Dendritic cell treated with granulocyte-macrophage colony-stimulating factor and Interleukin-4, amounts not matched to agents 40 ng/mL and 50 ng/mL, for 4 days (primary cell): ENCODE measurements at regions of chr2 and their contacts with region 1.

Region 1: GRCh38 chr2:101205521-101205998 is 47.1 kb upstream of the CNOT11 start:
- H3K4me3 Mint-ChIP-seq: peak overlapping the region; percentile 13
- H3K27ac Mint-ChIP-seq: no peak overlapping the region
- H3K4me1 Mint-ChIP-seq: peaks cover 5% of the 10 kb centered on the region
- H3K27me3 Mint-ChIP-seq: no peaks in the 10 kb centered on the region

Region 2: GRCh38 chr2:101012706-101013181 is 192.8 kb before region 1 on chr2:
- intact Hi-C with region 1: loop called (anchors 1 kb)
- H3K4me3 Mint-ChIP-seq: no peak overlapping the region
- H3K27ac Mint-ChIP-seq: peak overlapping the region; percentile 39
- H3K4me1 Mint-ChIP-seq: peaks cover 34% of the 10 kb centered on the region
- H3K27me3 Mint-ChIP-seq: no peaks in the 10 kb centered on the region

Region 3: DNA sequence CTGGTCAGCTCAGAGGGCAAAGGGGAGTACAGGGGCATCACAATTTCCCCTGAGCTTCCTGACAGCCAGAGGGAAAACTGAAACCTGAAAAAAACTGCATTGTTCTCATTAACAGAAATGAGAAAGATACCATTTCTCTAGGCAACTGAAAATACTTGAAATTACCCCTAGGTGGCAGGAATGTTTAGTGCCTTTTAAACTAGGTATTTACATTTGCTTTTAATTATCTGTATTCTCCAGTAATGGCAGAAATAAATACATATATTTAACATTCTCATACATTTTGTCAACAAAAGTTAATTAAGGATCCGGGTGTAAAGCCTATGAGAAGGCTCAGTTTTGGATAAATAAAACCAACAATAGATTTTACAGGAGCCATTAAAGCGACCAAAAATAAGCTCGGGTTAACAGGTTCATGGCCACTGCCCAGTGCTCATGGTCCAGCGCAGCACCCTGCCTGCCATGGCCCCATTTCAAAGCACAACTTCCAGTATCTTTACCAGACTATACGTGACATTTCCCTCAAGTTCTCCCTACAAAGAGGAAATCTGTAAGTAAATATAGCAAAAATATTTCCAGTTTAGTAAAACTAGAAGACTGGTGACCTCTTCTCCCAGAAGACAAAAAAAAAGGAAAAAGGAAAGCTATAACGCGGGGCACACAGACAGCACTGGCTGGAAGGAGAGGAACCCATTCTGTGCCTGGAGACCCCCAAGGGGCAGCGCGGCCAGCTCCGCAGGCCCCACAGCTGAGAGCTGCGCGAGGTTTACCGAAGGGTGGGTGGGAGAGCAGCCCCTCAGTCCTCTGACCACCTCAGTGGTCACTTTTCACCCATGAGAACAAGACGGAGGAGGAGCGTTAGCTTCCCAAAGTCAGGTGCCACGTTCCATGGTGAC is 168.8 kb before region 1 on chr2:
- intact Hi-C with region 1: loop called (anchors 1 kb)
- H3K4me3 Mint-ChIP-seq: no peak overlapping the region
- H3K27ac Mint-ChIP-seq: no peak overlapping the region
- H3K4me1 Mint-ChIP-seq: peaks cover 29% of the 10 kb centered on the region
- H3K27me3 Mint-ChIP-seq: no peaks in the 10 kb centered on the region

Region 4: DNA sequence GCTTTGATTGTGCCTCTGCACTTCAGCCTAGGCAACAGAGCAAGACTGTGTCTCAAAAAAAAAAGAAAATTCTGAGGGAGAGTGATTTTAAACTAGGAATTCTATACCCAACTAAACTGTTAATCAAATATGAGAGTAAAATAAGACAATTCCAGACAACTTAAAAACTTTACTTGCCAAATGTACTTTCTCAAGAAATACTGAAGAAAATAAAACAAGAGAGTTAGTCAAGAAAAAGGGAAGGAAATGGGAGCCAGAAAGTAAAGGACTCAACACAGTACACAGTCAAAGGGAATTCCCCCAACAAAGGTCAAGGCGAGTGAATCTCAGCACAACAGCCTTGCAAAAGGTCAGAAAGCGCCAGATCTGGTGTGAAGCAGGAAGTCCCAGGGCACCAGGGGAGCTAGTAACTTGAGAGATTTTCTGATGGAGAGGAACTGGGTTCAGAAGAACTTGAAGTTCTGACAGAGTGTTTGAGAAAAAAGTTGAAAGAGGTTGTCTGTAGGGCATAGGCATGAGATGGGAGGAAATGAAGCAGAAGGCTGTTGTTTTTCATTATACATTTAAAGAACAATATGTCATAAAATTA is 31.8 kb before region 1 on chr2:
- intact Hi-C with region 1: no loop called
- H3K4me3 Mint-ChIP-seq: no peak overlapping the region
- H3K27ac Mint-ChIP-seq: peak overlapping the region; percentile 23
- H3K4me1 Mint-ChIP-seq: peaks cover 75% of the 10 kb centered on the region
- H3K27me3 Mint-ChIP-seq: no peaks in the 10 kb centered on the region

Region 5: DNA sequence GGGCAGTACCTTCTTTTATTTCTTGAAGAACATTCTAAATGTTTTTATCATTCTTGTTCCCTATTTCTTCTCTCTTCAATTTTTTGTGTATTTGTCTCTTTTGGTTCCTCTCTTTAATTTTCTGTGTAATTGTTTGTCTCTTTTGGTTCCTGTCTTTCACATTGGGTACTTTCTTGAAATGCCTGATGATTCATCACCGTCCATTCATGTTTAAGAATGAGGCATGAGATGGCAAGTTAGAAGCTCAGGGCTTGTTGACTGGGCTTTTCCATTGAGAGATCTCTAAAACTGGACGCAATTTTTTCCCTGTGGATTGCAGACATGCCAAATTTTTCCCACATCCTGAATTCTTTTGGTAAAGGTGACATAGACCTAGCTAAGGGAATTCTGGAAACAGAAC is 752.5 kb after region 1 on chr2:
- intact Hi-C with region 1: no loop called
- H3K4me3 Mint-ChIP-seq: peak overlapping the region; percentile 1
- H3K27ac Mint-ChIP-seq: peak overlapping the region; percentile 79
- H3K4me1 Mint-ChIP-seq: peaks cover 85% of the 10 kb centered on the region
- H3K27me3 Mint-ChIP-seq: no peaks in the 10 kb centered on the region